ENCODE measurements at regions of chr9 and their contacts with region 1.

Region 1: GRCh38 chr9:113410207-113410864 is at the starts of genes C9orf43 and POLE3:
- DNase-seq: peak; percentile 99
- H3K4me3 Mint-ChIP-seq: peak within 1 kb of the TSS; percentile 97
- H3K27ac Mint-ChIP-seq: peak within 1 kb of the TSS; percentile 99
- H3K4me1 Mint-ChIP-seq: peaks cover 20% of the 10 kb centered on the region
- H3K27me3 Mint-ChIP-seq: no peaks in the 10 kb centered on the region
- total RNA-seq, gene C9orf43: 0.51 and 0.52 TPM in 2 replicates
- total RNA-seq, gene POLE3: 81.4 and 84.4 TPM in 2 replicates

Region 2: DNA sequence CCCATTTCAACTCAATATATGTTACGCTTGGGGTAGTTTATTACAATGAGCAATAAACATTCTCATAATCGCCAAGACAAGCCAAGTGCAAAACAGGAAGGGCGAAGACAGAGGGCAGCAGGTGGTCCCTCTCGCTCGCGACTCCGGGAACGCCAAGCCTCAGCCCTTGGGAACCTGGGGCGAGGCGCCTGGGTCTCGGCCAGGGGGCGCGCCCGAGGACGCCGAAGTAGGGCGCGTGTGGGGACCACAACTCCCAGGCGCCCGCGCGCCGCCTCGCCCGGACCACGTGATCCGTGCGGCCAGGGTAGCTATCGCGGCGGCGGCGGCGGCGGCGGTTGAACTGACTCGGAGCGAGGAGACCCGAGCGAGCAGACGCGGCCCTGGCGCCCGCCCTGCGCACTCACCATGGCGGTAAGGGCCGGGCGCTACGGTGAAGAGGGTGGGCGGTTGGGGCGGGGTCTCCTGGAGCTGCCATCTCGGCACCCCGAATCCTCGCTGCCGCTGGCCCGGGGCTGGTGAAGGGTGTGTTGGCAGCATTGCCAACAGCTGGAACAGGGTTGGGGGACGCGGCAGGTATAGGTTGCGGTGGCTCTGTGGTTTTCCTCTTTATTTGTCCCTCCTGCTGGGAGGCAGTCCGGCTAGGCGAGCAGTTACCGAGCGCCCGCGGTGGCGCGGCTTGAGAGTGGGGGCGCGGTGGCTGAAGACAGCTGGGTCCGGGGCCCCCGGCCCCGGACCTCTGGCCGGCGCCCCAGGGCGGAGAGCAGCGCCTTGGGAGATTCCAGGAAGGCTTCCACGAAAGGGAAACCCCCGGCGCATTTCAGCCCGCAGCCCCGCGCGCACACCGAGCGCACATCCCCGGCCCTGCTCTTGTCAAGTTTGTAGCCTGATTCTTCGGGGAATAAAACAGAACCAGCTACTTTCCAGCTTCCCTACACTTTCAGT is 259.4 kb before region 1 on chr9 and contains the start of gene SLC31A2:
- intact Hi-C with region 1: loop called (anchors 2 kb)
- DNase-seq: peak; percentile 97
- H3K4me3 Mint-ChIP-seq: peak within 1 kb of the TSS; percentile 84
- H3K27ac Mint-ChIP-seq: peak within 1 kb of the TSS; percentile 80
- H3K4me1 Mint-ChIP-seq: peaks cover 28% of the 10 kb centered on the region
- H3K27me3 Mint-ChIP-seq: peaks cover 2% of the 10 kb centered on the region
- total RNA-seq, gene SLC31A2: 4.5 and 5.3 TPM in 2 replicates

Region 3: GRCh38 chr9:113275157-113276131 is 134.9 kb before region 1 on chr9 and contains the starts of genes CDC26 and PRPF4:
- intact Hi-C with region 1: loop called (anchors 1 kb)
- DNase-seq: peak; percentile 99
- H3K4me3 Mint-ChIP-seq: no peak within 1 kb of the TSS
- H3K27ac Mint-ChIP-seq: no peak within 1 kb of the TSS
- H3K4me1 Mint-ChIP-seq: peaks cover 28% of the 10 kb centered on the region
- H3K27me3 Mint-ChIP-seq: no peaks in the 10 kb centered on the region
- total RNA-seq, gene CDC26: 52.0 and 57.4 TPM in 2 replicates
- total RNA-seq, gene PRPF4: 63.6 and 64.6 TPM in 2 replicates

Region 4: GRCh38 chr9:113340017-113340699 is 70.2 kb before region 1 on chr9 and contains the start of gene WDR31:
- intact Hi-C with region 1: loop called (anchors 1 kb)
- DNase-seq: peak; percentile 95
- H3K4me3 Mint-ChIP-seq: peak within 1 kb of the TSS; percentile 81
- H3K27ac Mint-ChIP-seq: peak within 1 kb of the TSS; percentile 78
- H3K4me1 Mint-ChIP-seq: peaks cover 43% of the 10 kb centered on the region
- H3K27me3 Mint-ChIP-seq: no peaks in the 10 kb centered on the region
- total RNA-seq, gene WDR31: 2.2 and 2.7 TPM in 2 replicates

Region 5: DNA sequence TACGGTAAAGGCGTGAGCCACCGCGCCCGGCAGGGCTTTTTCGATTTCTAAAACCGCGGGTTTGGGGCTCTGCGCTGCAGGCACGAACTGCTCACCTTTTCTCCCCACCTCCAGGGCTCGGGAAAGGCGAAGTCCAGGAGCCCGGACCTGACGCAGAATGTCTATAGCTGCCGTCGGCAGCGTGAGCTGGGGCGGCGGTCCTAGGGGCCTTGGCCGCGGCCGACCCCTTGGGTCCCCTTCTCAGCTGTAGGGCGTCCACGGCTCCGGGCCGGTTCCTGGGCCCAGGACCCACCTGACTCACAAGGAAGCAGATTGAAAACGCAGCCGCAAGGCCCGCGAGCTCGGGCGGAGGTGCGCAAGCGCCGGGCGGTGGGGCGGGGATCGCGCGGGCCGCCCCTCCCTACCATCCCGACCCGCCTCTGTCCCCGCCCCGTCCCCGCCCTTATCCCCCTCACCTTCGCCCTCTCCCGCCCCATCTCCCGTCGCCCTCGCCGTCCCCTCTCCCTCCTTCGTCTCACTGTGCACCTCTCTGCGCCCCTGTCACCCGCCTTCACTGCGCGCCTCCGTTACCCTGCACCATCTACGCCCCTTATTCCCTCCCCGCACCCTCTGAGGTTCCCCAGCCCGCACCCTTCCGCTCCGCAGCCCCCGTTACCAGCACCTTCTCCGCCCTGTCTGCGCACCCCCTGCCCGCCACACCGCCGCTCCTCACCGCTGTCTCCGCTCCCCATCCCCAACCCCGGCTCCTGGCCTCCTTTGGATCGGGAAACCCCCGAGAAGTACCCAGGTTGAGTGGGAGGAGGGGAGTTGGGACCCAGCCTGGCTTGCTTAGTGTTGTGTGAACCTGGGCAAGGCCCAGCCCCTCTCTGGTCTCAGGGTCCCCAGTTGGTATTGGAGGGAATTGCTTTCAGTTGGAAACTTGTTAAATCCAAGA is 33.4 kb before region 1 on chr9 and contains the start of gene HDHD3:
- intact Hi-C with region 1: loop called (anchors 1 kb)
- DNase-seq: peak; percentile 95
- H3K4me3 Mint-ChIP-seq: peak within 1 kb of the TSS; percentile 92
- H3K27ac Mint-ChIP-seq: peak within 1 kb of the TSS; percentile 83
- H3K4me1 Mint-ChIP-seq: peaks cover 15% of the 10 kb centered on the region
- H3K27me3 Mint-ChIP-seq: no peaks in the 10 kb centered on the region
- total RNA-seq, gene HDHD3: 16.5 and 17.8 TPM in 2 replicates

Region 6: DNA sequence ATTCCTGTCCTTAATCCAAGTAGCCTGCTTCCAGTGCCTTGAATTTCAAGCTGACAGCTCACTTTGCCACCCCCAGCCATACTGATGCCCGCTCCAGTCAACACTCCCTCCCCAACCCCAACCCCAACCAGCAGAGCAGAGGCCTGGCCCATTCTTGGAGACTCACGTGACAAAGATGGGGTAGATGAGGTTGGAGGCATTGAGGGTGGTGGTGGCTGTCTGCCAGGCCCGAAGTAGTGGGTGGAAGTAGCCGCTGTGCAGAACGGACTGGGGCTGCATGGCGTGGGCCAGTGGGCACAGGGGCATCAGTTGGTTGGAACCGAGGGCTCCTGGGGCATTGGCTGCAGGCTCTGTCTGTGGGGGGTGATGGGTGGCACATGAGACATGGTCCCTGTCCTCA is 17.1 kb before region 1 on chr9:
- intact Hi-C with region 1: no loop called
- DNase-seq: no peak
- H3K4me3 Mint-ChIP-seq: no peak overlapping the region
- H3K27ac Mint-ChIP-seq: no peak overlapping the region
- H3K4me1 Mint-ChIP-seq: peaks cover 5% of the 10 kb centered on the region
- H3K27me3 Mint-ChIP-seq: no peaks in the 10 kb centered on the region

Region 7: DNA sequence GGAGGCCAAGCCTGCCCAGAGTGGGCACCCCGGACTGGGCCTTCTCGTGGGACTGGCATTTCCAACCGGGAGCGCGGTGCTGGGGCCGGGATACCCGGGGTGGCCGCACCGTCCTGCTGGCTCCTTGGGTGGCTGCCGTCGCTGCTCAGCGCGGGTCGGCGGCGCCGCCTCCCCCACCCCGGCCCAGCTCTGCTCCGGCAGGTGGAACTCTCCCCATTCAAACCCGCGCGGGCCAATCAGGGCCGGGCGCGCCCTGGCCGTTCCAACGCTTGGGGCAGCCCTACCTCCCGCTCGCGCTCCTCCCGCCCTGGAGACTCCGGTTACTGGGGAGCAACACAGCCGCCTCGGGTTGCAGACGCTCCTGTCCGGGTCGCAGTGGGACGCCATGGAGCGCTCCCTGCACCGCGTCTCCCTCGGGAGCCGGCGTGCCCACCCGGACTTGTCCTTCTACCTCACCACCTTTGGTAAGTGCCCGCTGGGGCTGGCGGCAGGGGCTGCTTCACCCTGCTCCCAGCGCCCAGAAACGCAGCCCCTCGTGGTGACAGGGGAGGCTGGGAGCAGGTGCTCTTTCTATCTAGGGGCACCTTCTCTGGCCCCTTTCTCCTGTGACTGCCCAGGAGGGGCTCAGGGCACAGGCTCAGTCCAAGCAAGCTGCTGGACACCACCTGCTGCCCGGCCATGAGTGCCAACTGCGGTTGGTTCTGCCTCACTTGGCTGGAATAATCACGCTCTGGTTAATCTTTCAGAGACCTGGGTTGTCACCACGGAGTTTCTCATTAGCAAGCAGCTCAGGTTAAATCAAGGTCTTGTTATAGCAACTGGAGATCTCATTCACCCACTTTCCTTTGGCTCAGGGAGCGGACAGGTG is 53.3 kb after region 1 on chr9 and contains the start of gene RGS3:
- intact Hi-C with region 1: no loop called
- DNase-seq: no peak
- H3K4me3 Mint-ChIP-seq: no peak within 1 kb of the TSS
- H3K27ac Mint-ChIP-seq: no peak within 1 kb of the TSS
- H3K4me1 Mint-ChIP-seq: peaks cover 6% of the 10 kb centered on the region
- H3K27me3 Mint-ChIP-seq: no peaks in the 10 kb centered on the region
- total RNA-seq, gene RGS3: 113 and 122 TPM in 2 replicates

Region 8: DNA sequence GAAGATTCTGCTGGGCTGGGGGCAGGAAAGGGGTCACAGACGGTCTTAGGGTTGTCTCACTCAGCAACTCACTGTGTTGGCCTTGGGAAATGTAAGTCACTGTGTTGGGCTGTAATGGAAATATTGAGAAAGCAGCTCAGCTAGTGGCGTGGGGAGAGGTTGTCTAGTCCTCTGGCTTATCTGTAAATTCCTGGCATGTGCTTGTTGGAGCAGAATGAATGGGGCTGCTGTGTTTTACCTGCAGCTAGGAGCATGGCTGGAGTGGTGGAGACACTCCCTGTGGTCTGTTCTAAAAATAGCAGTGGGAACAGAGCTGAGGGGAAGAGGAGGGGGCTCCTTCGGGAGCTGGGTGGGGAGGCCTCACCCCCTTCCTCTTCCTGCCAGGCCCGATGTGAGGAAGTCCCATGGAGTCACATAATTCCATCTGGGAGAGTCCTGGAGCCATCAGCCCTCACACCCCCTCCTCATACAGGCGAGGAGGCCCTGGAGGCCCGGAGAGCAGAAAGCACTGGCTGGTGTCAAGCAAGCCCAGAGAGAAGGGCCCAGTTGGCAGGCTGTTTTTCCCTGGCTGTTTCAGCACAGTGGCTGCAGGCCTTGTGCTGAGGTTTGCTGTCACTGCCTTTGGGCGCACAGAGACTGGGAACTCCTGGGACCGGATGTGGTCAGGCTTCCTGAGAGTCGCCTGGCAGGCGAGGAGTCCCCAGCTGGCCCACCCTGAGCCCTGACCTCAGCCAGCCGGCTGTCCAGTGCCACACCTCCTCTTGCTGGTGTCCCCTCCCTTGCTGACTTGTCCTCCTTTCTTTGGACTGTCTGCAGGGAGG is 138.1 kb after region 1 on chr9:
- intact Hi-C with region 1: loop called (anchors 1 kb)
- DNase-seq: no peak
- H3K4me3 Mint-ChIP-seq: peak overlapping the region; percentile 62
- H3K27ac Mint-ChIP-seq: peak overlapping the region; percentile 92
- H3K4me1 Mint-ChIP-seq: peaks cover 33% of the 10 kb centered on the region
- H3K27me3 Mint-ChIP-seq: no peaks in the 10 kb centered on the region

Region 9: DNA sequence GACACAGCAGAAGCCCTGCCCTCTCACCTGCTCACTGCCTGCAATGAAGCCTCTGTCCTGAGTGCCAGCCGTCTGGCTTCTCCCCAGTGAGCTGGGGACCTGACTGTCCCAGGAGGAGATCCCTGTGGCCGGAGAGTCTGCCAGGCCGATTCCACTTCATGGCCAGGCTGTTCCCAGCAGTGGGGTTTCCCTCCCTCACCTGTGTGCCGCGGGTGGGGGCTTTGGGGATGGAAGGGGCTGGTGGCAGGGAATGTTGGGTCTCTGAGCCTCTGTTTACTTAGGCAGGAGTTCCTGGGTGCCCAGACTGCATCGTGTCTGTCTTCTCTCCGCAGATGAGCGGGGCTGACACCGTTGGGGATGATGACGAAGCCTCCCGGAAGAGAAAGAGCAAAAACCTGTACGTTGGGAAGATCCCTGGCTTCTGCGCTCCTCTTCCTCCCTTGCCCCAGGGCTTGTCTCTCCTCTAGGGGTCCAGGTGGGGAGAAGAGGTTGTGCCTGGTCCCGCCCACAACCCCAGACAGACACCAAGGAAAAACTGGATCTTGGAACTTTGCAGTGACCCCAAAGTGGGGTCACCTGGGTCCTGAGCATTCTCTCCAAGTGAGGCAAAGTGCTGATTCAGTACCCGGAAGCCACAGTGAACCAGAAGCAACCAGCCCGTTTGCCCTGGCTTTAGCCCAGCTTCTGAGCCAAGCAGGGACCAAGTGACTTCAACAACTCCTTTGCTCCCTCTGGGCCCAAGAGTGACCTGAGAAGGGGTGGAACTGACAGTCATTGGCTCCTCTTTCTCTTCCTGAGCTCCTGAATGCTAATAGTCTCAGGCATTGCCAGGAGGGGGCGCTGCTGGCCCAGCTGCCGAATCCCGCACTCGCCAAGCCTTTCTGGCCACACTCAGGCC is 180.9 kb after region 1 on chr9:
- intact Hi-C with region 1: loop called (anchors 2 kb)
- DNase-seq: peak; percentile 89
- H3K4me3 Mint-ChIP-seq: no peak overlapping the region
- H3K27ac Mint-ChIP-seq: peak overlapping the region; percentile 34
- H3K4me1 Mint-ChIP-seq: peaks cover 42% of the 10 kb centered on the region
- H3K27me3 Mint-ChIP-seq: no peaks in the 10 kb centered on the region

Region 10: GRCh38 chr9:113913426-113914195 is 503.3 kb after region 1 on chr9:
- intact Hi-C with region 1: no loop called
- DNase-seq: peak; percentile 32
- H3K4me3 Mint-ChIP-seq: no peak overlapping the region
- H3K27ac Mint-ChIP-seq: no peak overlapping the region
- H3K4me1 Mint-ChIP-seq: no peaks in the 10 kb centered on the region
- H3K27me3 Mint-ChIP-seq: peaks cover 5% of the 10 kb centered on the region